Heart right ventricle (tissue), 16 donors: ENCODE measurements at regions of chr20 and their contacts with region 1.

Region 1: GRCh38 chr20:23043376-23043775 is 6.1 kb downstream of the THBD start:
- DNase-seq: no peak
- ATAC-seq: no peak
- H3K4me3 ChIP-seq: no peak overlapping the region
- H3K27ac ChIP-seq: no peak overlapping the region
- H3K4me1 ChIP-seq: peaks cover 0 to 40% (median 34%) of the 10 kb centered on the region in 9 donors
- H3K27me3 ChIP-seq: peaks cover 0 to 66% (median 34%) of the 10 kb centered on the region in 7 donors
- CTCF ChIP-seq: no peak

Region 2: GRCh38 chr20:22974353-22974752 is 69.0 kb before region 1 on chr20:
- intact Hi-C with region 1: no loop called
- DNase-seq: no peak
- ATAC-seq: no peak
- H3K4me3 ChIP-seq: no peak overlapping the region
- H3K27ac ChIP-seq: no peak overlapping the region
- H3K4me1 ChIP-seq: peaks cover 3 to 25% (median 16%) of the 10 kb centered on the region in 9 donors
- H3K27me3 ChIP-seq: peaks cover 0 to 22% (median 4%) of the 10 kb centered on the region in 7 donors
- CTCF ChIP-seq: peak in 5 of 9 donors; percentile 18 to 52 (median 18)

Region 3: GRCh38 chr20:22984606-22985005 is 58.8 kb before region 1 on chr20:
- intact Hi-C with region 1: loop called in 1 of 10 experiments (anchors 5 kb)
- DNase-seq: peak in 1 of 2 donors; percentile 18
- ATAC-seq: peak in 7 of 8 donors; percentile 45 to 78 (median 76)
- H3K4me3 ChIP-seq: no peak overlapping the region
- H3K27ac ChIP-seq: peak overlapping the region in 7 of 10 donors; percentile 14 to 74 (median 60)
- H3K4me1 ChIP-seq: peaks cover 3 to 21% (median 12%) of the 10 kb centered on the region in 9 donors
- H3K27me3 ChIP-seq: peaks cover 0 to 20% (median 0%) of the 10 kb centered on the region in 7 donors
- CTCF ChIP-seq: no peak